Psoas muscle (tissue), 8 donors: ENCODE measurements at regions of chr1 and their contacts with region 1.

Region 1: GRCh38 chr1:214500340-214501055 is 50.9 kb downstream of the PTPN14 start:
- DNase-seq: no peak
- ATAC-seq: no peak
- H3K4me3 ChIP-seq: no peak overlapping the region
- H3K27ac ChIP-seq: peak overlapping the region; percentile 60
- H3K4me1 ChIP-seq: peaks cover 72% of the 10 kb centered on the region
- H3K27me3 ChIP-seq: no peaks in the 10 kb centered on the region
- CTCF ChIP-seq: no peak

Region 2: GRCh38 chr1:214466403-214467077 is 34.0 kb before region 1 on chr1:
- intact Hi-C with region 1: no loop called
- DNase-seq: no peak
- ATAC-seq: no peak
- H3K4me3 ChIP-seq: no peak overlapping the region
- H3K27ac ChIP-seq: peak overlapping the region; percentile 30
- H3K4me1 ChIP-seq: peaks cover 58% of the 10 kb centered on the region
- H3K27me3 ChIP-seq: no peaks in the 10 kb centered on the region
- CTCF ChIP-seq: no peak

Region 3: GRCh38 chr1:214537219-214537618 is 36.7 kb after region 1 on chr1:
- intact Hi-C with region 1: loop called in 1 of 2 experiments (anchors 5 kb)
- DNase-seq: no peak
- ATAC-seq: peak; percentile 76 to 87 (median 78)
- H3K4me3 ChIP-seq: no peak overlapping the region
- H3K27ac ChIP-seq: peak overlapping the region; percentile 69
- H3K4me1 ChIP-seq: peaks cover 53% of the 10 kb centered on the region
- H3K27me3 ChIP-seq: no peaks in the 10 kb centered on the region
- CTCF ChIP-seq: no peak